HCT116 (cell line): ENCODE measurements at regions of chr7 and their contacts with region 1.

Region 1: GRCh38 chr7:129218514-129219062 is 6.2 kb upstream of the AHCYL2 start:
- DNase-seq: peak; percentile 67
- ATAC-seq: peak; percentile 96
- H3K4me3 ChIP-seq: no peak overlapping the region
- H3K27ac ChIP-seq: no peak overlapping the region
- H3K4me1 ChIP-seq: no peaks in the 10 kb centered on the region; a peak in 1 of 4 replicates
- H3K27me3 ChIP-seq: no peaks in the 10 kb centered on the region
- CTCF ChIP-seq: peak; percentile 87 to 91 (median 89)
- POLR2A ChIP-seq: no peak
- RAD21 ChIP-seq: peak; percentile 98

Region 2: GRCh38 chr7:128883622-128884501 is 334.7 kb before region 1 on chr7:
- CTCF ChIA-PET with region 1: no interaction called
- POLR2A ChIA-PET with region 1: no interaction called
- RAD21 ChIA-PET with region 1: no interaction called
- intact Hi-C with region 1: no loop called
- DNase-seq: peak; percentile 58
- ATAC-seq: peak; percentile 71
- H3K4me3 ChIP-seq: no peak overlapping the region
- H3K27ac ChIP-seq: no peak overlapping the region
- H3K4me1 ChIP-seq: peaks cover 0 to 15% of the 10 kb centered on the region in 2 experiments; a peak in 2 of 4 replicates
- H3K27me3 ChIP-seq: no peaks in the 10 kb centered on the region
- CTCF ChIP-seq: peak in 2 of 3 experiments; percentile 83 to 97; a peak in 4 of 6 replicates
- POLR2A ChIP-seq: no peak
- RAD21 ChIP-seq: no peak

Region 3: GRCh38 chr7:129343099-129343700 is 124.6 kb after region 1 on chr7:
- CTCF ChIA-PET with region 1: interaction called, 10 read pairs
- POLR2A ChIA-PET with region 1: no interaction called
- RAD21 ChIA-PET with region 1: no interaction called
- intact Hi-C with region 1: loop called (anchors 10 kb)
- DNase-seq: peak; percentile 37
- ATAC-seq: peak; percentile 77
- H3K4me3 ChIP-seq: no peak overlapping the region
- H3K27ac ChIP-seq: no peak overlapping the region
- H3K4me1 ChIP-seq: no peaks in the 10 kb centered on the region
- H3K27me3 ChIP-seq: no peaks in the 10 kb centered on the region
- CTCF ChIP-seq: peak; percentile 65 to 75 (median 71)
- POLR2A ChIP-seq: no peak
- RAD21 ChIP-seq: peak; percentile 70

Region 4: DNA sequence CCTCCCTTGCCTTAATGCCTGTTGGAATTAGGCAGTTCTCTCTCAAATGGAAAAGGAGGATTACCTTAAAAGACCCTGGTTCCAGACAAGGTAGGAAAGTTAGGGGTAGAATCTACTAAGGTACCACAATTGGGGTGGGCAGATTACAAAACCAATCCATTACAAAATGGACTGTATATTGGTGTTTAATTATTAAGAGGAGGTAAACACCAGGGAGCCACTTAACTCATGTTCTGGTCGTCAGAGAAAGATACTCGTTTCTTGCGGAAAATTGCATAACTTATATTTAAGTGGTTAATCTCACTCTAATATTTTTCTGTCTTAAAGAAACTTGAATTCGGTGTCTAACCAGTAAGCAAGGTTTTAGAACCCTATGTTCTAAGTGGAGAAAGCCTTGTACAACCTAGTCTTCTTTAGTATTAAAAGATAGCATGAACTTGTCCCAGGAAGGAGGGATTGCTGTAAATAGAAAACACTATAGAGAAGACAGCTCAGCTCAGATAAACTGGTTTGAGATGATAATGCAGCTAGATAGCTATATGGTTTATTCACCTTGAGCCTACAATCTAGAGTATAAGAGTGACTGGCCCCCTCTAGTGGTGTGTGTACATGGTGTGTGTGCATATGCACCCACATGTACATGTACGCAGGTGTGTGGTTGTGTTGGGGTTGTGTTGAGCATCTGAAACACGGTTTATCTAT is 157.6 kb after region 1 on chr7:
- CTCF ChIA-PET with region 1: interaction called, 11 read pairs
- POLR2A ChIA-PET with region 1: no interaction called
- RAD21 ChIA-PET with region 1: interaction called in 1 of 2 experiments, 3 read pairs
- intact Hi-C with region 1: no loop called
- DNase-seq: peak; percentile 32
- ATAC-seq: peak; percentile 100
- H3K4me3 ChIP-seq: no peak overlapping the region
- H3K27ac ChIP-seq: no peak overlapping the region
- H3K4me1 ChIP-seq: no peaks in the 10 kb centered on the region
- H3K27me3 ChIP-seq: no peaks in the 10 kb centered on the region
- CTCF ChIP-seq: peak; percentile 30 to 83 (median 81); a peak in 5 of 6 replicates
- POLR2A ChIP-seq: no peak
- RAD21 ChIP-seq: peak; percentile 47

Region 5: GRCh38 chr7:129635300-129636029 is 416.9 kb after region 1 on chr7:
- CTCF ChIA-PET with region 1: interaction called, 3 read pairs
- POLR2A ChIA-PET with region 1: no interaction called
- RAD21 ChIA-PET with region 1: no interaction called
- intact Hi-C with region 1: loop called (anchors 1 kb)
- DNase-seq: peak; percentile 47
- ATAC-seq: peak; percentile 99
- H3K4me3 ChIP-seq: no peak overlapping the region
- H3K27ac ChIP-seq: no peak overlapping the region
- H3K4me1 ChIP-seq: no peaks in the 10 kb centered on the region
- H3K27me3 ChIP-seq: no peaks in the 10 kb centered on the region
- CTCF ChIP-seq: peak; percentile 75 to 89 (median 89); a peak in 5 of 6 replicates
- POLR2A ChIP-seq: no peak
- RAD21 ChIP-seq: peak; percentile 78

Region 6: GRCh38 chr7:129825496-129826267 is 607.1 kb after region 1 on chr7:
- CTCF ChIA-PET with region 1: interaction called, 11 read pairs
- POLR2A ChIA-PET with region 1: no interaction called
- RAD21 ChIA-PET with region 1: no interaction called
- intact Hi-C with region 1: loop called (anchors 5 kb)
- DNase-seq: peak; percentile 62
- ATAC-seq: peak; percentile 72
- H3K4me3 ChIP-seq: peak overlapping the region; percentile 52 to 60
- H3K27ac ChIP-seq: peak overlapping the region; percentile 98
- H3K4me1 ChIP-seq: peaks cover 43 to 59% of the 10 kb centered on the region in 2 experiments
- H3K27me3 ChIP-seq: no peaks in the 10 kb centered on the region
- CTCF ChIP-seq: peak in 2 of 3 experiments; percentile 34 to 44; a peak in 2 of 6 replicates
- POLR2A ChIP-seq: peak; percentile 31
- RAD21 ChIP-seq: no peak